GM12878 (cell line): ENCODE measurements at regions of chr7 and their contacts with region 1.

Region 1: DNA sequence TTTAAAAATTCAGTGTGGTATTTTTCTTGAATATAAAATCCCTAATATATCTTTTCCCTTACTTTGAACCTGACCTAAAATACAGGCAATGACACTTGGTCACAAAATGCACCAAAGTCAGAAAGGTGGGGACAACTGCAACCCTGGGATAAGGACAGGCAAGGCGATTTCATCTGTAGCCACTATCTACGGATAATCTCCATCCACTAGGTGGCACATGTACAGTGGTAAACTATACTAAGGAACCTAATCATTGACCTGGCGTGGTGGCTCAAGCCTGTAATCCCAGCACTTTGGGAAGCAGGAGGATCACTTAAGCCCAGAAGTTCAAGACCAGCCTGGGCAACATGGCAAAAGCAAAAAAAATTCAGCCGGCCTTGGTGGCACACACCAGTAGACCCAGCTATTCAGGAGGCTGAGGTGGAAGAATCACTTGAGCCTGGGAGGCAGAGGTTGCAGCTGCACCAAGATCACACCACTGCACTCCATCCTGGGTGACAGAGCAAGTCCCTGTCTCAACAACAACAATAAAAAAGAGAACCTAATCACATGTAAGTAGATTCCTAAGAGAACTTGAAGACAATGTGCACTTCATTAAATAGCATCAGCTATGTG is 98.9 kb downstream of the KMT2C start:
- DNase-seq: no peak
- ATAC-seq: peak; percentile 90
- H3K4me3 ChIP-seq: peak overlapping the region; percentile 8; the same call in 1 of the 2 replicates
- H3K27ac ChIP-seq: no peak overlapping the region
- H3K4me1 ChIP-seq: peaks cover 31% of the 10 kb centered on the region; the same call in 1 of the 2 replicates
- H3K27me3 ChIP-seq: no peaks in the 10 kb centered on the region
- CTCF ChIP-seq: peak; percentile 51 to 57 (median 57); a peak in 5 of 6 replicates
- EP300 ChIP-seq: no peak
- POLR2A ChIP-seq: no peak
- RAD21 ChIP-seq: peak; percentile 67

Region 2: DNA sequence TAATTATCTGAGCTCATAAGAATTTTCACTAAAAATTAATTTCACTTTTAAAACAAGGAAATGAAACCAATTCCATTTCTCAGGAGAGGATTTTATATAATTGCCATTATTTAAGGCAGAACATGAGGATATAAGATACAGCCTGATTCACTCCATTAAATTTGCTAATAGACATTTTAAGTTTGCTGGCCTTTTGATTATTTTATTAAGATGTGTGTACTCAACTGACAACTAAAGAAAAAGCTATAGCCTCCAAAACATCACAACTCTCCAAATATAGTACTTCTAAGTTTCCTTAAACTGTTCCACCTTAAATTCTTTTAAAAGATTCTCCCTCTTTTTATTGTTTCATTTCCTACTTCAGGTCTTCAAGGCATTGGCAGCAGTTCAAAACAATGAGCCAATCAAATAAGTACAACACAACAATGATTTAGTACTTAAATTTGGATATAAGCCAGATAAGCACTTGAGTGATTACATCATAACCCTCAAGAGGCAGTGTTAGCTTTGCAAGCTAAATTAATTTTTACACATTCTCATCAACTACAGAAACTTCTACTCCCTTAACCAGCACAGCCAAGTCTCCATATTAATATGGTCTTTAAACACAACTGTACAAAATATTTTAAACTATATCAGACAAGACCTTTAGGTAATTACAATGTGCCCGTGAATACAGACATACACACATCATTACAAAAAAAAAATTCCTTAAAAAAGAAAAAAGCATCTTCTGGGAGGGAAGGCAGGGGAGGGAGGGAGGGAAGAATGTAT is 22.8 kb before region 1 on chr7:
- CTCF ChIA-PET with region 1: interaction called, 41 read pairs
- POLR2A ChIA-PET with region 1: interaction called, 10 read pairs
- RAD21 ChIA-PET with region 1: interaction called, 35 read pairs
- SMC1A ChIA-PET with region 1: interaction called, 64 read pairs
- in situ Hi-C with region 1: no loop called
- intact Hi-C with region 1: no loop called
- DNase-seq: no peak
- ATAC-seq: peak; percentile 60
- H3K4me3 ChIP-seq: no peak overlapping the region
- H3K27ac ChIP-seq: no peak overlapping the region
- H3K4me1 ChIP-seq: peaks cover 12% of the 10 kb centered on the region; the same call in 1 of the 2 replicates
- H3K27me3 ChIP-seq: no peaks in the 10 kb centered on the region
- CTCF ChIP-seq: no peak
- EP300 ChIP-seq: no peak
- POLR2A ChIP-seq: no peak
- RAD21 ChIP-seq: no peak

Region 3: GRCh38 chr7:152430854-152431253 is 94.0 kb after region 1 on chr7:
- CTCF ChIA-PET with region 1: interaction called, 26 read pairs
- POLR2A ChIA-PET with region 1: interaction called, 8 read pairs
- RAD21 ChIA-PET with region 1: interaction called, 16 read pairs
- SMC1A ChIA-PET with region 1: interaction called, 25 read pairs
- in situ Hi-C with region 1: no loop called
- intact Hi-C with region 1: loop called (anchors 2 kb)
- DNase-seq: no peak
- ATAC-seq: no peak
- H3K4me3 ChIP-seq: peak overlapping the region; percentile 52; the same call in 1 of the 2 replicates
- H3K27ac ChIP-seq: peak overlapping the region; percentile 28; the same call in 1 of the 2 replicates
- H3K4me1 ChIP-seq: peaks cover 7% of the 10 kb centered on the region
- H3K27me3 ChIP-seq: no peaks in the 10 kb centered on the region
- CTCF ChIP-seq: no peak
- EP300 ChIP-seq: no peak
- POLR2A ChIP-seq: no peak
- RAD21 ChIP-seq: no peak

Region 4: DNA sequence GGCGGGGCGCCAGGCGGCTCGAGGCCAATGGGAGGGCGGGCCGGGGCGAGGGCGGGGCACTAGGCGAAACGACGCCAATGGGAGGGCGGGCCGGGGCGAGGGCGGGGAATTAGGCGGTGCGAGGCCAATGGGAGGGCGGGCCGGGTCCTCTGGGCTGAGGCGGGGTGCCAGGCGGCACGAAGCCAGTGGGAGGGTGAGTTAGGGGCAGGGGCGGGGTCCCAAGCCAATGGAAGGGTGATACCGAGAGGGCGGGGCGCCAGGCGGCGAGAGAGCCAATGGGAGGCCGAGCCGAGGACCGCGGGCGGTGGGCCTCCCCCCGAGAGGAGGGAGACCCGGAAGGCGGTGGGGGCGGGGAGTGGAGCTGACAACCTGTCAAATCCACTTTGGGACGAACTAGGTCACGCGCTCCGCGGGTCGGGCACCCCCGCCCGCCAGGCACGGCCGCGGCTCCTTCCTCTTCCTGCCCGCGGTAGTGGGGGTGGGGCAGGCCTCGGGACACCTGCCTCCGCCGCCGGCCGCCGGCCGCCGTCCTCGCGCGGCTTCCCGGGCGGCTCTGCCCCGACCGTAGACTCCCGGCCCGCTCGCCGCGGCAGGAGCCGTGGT is 126.9 kb after region 1 on chr7:
- CTCF ChIA-PET with region 1: interaction called, 6 read pairs
- POLR2A ChIA-PET with region 1: interaction called, 7 read pairs
- RAD21 ChIA-PET with region 1: interaction called, 8 read pairs
- SMC1A ChIA-PET with region 1: interaction called, 8 read pairs
- in situ Hi-C with region 1: no loop called
- intact Hi-C with region 1: loop called (anchors 10 kb)
- DNase-seq: peak; percentile 95
- ATAC-seq: peak; percentile 93
- H3K4me3 ChIP-seq: peak overlapping the region; percentile 89
- H3K27ac ChIP-seq: peak overlapping the region; percentile 96
- H3K4me1 ChIP-seq: no peaks in the 10 kb centered on the region; the same call in 1 of the 2 replicates
- H3K27me3 ChIP-seq: no peaks in the 10 kb centered on the region
- CTCF ChIP-seq: no peak
- EP300 ChIP-seq: peak; percentile 20 to 72; a peak in 2 of 4 replicates
- POLR2A ChIP-seq: peak; percentile 90; the same call in 1 of the 2 replicates
- RAD21 ChIP-seq: no peak

Region 5: GRCh38 chr7:152485814-152486213 is 149.0 kb after region 1 on chr7:
- CTCF ChIA-PET with region 1: no interaction called
- POLR2A ChIA-PET with region 1: no interaction called
- RAD21 ChIA-PET with region 1: no interaction called
- SMC1A ChIA-PET with region 1: no interaction called
- in situ Hi-C with region 1: no loop called
- intact Hi-C with region 1: no loop called
- DNase-seq: no peak
- ATAC-seq: no peak
- H3K4me3 ChIP-seq: no peak overlapping the region
- H3K27ac ChIP-seq: no peak overlapping the region
- H3K4me1 ChIP-seq: no peaks in the 10 kb centered on the region
- H3K27me3 ChIP-seq: no peaks in the 10 kb centered on the region
- CTCF ChIP-seq: no peak
- EP300 ChIP-seq: no peak
- POLR2A ChIP-seq: no peak
- RAD21 ChIP-seq: no peak